Sciatic nerve (tissue), 2 donors: ENCODE measurements at regions of chr13 and their contacts with region 1.

Region 1: DNA sequence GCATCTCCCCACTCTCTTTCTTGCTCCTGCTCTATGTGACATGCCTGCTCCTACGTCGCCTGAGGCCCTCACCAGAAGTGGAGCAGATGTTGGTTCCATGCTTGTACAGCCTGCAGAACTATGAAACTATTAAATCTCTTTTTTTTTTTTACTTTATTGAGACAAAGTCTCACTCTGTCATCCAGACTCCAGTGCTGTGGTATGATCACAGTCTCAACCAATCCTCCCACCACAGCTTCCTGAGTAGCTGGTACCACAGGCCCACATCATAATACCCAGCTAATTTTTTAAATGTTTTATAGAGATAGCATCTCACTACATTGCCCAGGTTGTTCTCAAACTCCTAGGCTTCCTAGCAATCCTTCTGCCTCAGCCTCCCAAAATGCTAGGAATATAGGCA is 1067.7 kb downstream of the PCDH9 start:
- DNase-seq: no peak
- ATAC-seq: no peak

Region 2: DNA sequence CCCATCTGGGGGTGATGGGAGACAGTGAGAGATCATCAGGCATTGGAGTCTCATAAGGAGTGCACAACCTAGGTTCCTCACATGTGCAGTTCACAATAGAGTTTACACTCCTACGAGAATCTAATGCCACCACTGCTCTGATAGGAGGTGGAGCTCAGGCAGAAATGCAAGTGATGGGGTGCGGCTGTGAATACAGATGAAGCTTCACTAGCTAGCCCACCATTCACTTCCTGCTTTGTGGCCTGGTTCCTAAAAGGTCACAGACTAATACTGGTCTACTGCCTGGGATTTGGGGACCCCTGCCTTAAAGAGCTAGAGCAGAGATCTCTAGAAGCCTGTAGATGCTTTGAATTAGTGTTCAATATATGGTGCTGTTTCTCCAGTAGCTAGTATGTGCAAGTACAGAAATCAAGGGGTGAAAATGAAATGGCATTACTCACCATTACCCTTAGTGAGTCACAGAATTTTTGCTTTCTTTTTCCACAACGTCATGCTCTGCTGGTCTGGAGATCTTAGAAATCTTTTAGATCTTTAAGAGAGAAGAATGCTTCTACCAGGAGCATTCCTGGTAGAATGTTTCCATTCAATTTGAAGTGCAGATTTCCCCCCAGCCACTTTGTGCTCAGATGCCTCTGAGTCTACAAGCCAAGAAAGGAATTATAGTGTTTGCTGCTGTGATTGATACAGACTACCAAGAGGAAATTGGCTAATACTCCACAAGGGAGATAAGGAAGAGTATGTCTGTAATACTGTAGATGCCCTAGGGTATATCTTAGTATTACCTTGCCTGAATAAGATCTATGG is 1233.6 kb before region 1 on chr13:
- intact Hi-C with region 1: loop called (anchors 10 kb)
- DNase-seq: no peak
- ATAC-seq: no peak

Region 3: GRCh38 chr13:65946387-65946786 is 216.1 kb before region 1 on chr13:
- intact Hi-C with region 1: no loop called
- DNase-seq: no peak
- ATAC-seq: no peak